ENCODE measurements at regions of chr12 and their contacts with region 1.

Region 1: GRCh38 chr12:92145731-92146496 is at the start of gene BTG1:
- DNase-seq: peak; percentile 100
- H3K4me3 ChIP-seq: peak within 1 kb of the TSS; percentile 84 to 94
- H3K27ac ChIP-seq: peak within 1 kb of the TSS; percentile 100
- H3K4me1 ChIP-seq: no peaks in the 10 kb centered on the region
- H3K27me3 ChIP-seq: no peaks in the 10 kb centered on the region
- CTCF ChIP-seq: peak in 1 of 3 experiments; percentile 5
- POLR2A ChIP-seq: peak; percentile 53 to 99
- total RNA-seq, gene BTG1: 73.7 TPM

Region 2: DNA sequence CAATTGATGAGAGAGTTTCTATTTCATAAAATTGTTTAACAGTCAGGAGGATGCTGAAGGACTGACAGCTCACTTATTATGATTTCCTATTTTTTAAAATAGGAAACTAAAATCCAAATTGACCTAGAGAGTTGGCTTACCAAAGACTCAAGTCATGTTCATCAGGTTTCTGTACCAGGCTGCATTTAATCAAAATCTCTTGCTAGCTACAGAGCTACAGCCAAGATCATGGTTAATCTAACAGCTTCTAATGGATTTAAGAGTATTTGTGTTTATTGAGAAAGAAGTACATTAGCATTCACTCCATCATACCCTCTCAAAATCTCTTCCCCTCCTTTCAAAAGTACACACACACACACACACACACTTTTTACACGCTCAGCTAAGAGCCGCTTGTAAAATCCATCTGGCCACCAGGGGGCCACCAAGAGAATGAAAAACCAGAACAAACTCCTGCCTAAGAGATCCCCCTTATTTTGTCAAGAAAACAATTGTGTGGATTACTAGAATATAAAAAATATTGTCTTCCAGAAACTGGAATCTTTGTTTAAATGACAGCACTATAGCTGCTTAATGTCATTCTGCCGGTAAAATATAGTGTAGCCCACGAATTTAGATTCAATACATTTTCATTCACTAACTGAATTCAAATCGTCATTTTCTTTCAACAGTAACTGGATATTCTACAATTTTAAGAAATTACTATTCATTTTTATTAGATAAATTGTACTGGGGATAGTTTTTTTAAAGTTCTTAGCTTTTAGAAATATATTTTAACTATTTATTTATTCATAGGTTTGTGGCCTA is 334.2 kb before region 1 on chr12:
- intact Hi-C with region 1: loop called (anchors 10 kb)
- DNase-seq: no peak
- H3K4me3 ChIP-seq: no peak overlapping the region
- H3K27ac ChIP-seq: no peak overlapping the region
- H3K4me1 ChIP-seq: peaks cover 4% of the 10 kb centered on the region
- H3K27me3 ChIP-seq: no peaks in the 10 kb centered on the region
- CTCF ChIP-seq: peak; percentile 38 to 74 (median 67)
- POLR2A ChIP-seq: no peak

Region 3: GRCh38 chr12:92244036-92244435 is 98.1 kb after region 1 on chr12:
- intact Hi-C with region 1: loop called (anchors 5 kb)
- DNase-seq: no peak
- H3K4me3 ChIP-seq: no peak overlapping the region
- H3K27ac ChIP-seq: peak overlapping the region; percentile 81
- H3K4me1 ChIP-seq: peaks cover 34% of the 10 kb centered on the region
- H3K27me3 ChIP-seq: no peaks in the 10 kb centered on the region
- CTCF ChIP-seq: no peak
- POLR2A ChIP-seq: no peak

Region 4: GRCh38 chr12:92561543-92561899 is 415.6 kb after region 1 on chr12:
- intact Hi-C with region 1: loop called (anchors 10 kb)
- DNase-seq: no peak
- H3K4me3 ChIP-seq: no peak overlapping the region
- H3K27ac ChIP-seq: peak overlapping the region; percentile 63
- H3K4me1 ChIP-seq: peaks cover 22% of the 10 kb centered on the region
- H3K27me3 ChIP-seq: no peaks in the 10 kb centered on the region
- CTCF ChIP-seq: no peak
- POLR2A ChIP-seq: no peak